Lower leg skin (tissue), 4 donors: ENCODE measurements at regions of chr1 and their contacts with region 1.

Region 1: DNA sequence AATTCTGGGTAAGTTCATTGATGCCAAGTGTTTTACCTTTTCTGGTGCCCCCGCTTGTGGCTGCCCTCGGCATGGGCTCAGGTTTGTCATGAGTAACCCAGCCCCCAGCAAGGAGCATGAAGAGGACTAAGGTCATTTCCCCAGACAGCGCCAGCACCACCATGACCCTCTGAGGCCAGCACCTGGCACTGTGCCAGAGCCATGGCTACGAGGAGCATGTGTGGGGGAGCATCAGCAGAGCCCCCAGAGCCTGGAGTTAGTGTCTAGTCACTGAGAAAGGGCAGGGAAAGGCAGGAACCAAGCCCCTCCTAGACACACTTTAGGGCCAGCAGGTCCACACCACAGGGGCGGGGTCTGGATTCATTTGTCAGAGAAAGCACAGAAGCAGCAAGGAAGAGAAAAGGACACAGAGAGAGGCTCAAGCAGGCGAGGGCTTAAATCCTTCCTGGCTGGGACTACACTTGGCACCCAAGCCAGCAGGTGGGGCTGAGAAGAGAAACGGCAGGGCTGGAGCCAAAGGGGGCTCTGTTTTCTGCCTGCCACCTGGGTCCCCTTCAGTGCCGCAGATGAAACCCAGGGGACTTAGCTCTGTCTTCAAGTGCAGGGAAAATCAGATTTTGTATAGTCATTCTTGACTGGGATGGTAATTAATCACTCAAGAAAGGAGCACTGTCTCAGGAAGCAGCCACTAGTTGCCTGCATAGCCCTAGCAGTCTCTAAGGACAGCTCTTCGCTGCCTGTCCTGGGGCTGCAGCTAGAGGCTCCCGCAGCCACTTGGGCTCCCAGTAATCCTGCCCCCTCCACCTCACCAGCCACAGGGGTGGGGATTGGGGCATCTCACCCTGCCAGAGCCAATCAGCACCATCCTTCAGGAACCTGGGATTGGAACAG is 79.6 kb upstream of the ZC3H12A start:
- DNase-seq: peak in 1 of 2 donors; percentile 81
- H3K4me3 ChIP-seq: no peak overlapping the region
- CTCF ChIP-seq: no peak
- POLR2A ChIP-seq: no peak

Region 2: DNA sequence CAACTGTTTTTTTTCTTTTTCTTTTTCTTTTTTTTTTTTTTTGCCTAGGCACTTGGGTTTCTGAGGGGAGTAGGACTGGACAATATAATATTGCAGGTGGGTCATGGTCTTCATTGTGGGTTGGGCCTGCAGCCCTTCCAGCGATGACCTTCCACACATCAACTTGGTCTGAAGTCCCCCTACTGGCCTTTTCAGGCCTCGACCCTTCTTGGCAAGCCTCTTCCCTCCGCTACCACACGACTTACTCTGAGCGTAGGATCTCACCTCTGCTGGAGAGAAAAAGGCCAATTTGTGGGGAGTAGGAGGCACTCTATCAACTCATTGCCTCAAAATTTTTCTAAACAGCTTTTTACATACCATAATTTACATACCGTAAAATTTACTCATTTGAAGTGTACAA is 309.4 kb before region 1 on chr1:
- intact Hi-C with region 1: no loop called
- DNase-seq: no peak
- H3K4me3 ChIP-seq: no peak overlapping the region
- CTCF ChIP-seq: no peak
- POLR2A ChIP-seq: no peak

Region 3: GRCh38 chr1:37323486-37324377 is 71.1 kb before region 1 on chr1:
- intact Hi-C with region 1: loop called (anchors 1 kb)
- DNase-seq: no peak
- H3K4me3 ChIP-seq: no peak overlapping the region
- CTCF ChIP-seq: no peak
- POLR2A ChIP-seq: no peak